Activated CD8-positive, alpha-beta T cell treated with anti-CD3 and anti-CD28 coated beads for 36 hours (primary cell): ENCODE measurements at regions of chr10 and their contacts with region 1.

Region 1: DNA sequence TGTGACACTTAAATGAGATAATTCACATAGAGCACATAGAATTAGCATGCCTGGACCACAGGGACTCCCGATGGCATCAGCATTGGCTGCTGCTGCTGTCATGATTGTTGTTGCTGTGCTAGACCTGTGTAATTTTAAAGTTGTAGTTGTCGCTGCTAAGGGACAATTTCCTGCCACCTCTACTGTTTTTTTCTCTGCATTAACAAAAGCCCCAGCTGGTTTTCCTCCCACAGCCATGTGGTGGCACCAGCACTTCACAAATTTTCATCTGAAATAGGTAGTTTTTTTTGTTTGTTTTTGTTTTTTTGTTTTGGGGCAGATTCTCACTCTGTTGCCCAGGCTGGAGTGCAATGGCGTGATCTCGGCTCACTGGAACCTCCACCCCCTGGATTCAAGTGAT is 25.4 kb upstream of the PRXL2A start:
- DNase-seq: peak; percentile 73
- ATAC-seq: peak; percentile 64
- H3K4me3 Mint-ChIP-seq: no peak overlapping the region
- H3K27ac Mint-ChIP-seq: peak overlapping the region; percentile 37
- H3K4me1 Mint-ChIP-seq: peaks cover 14% of the 10 kb centered on the region
- H3K27me3 Mint-ChIP-seq: no peaks in the 10 kb centered on the region
- CTCF ChIP-seq: peak; percentile 74

Region 2: GRCh38 chr10:80324086-80324485 is 58.9 kb before region 1 on chr10:
- CTCF ChIA-PET with region 1: no interaction called
- POLR2A ChIA-PET with region 1: no interaction called
- intact Hi-C with region 1: no loop called
- DNase-seq: peak; percentile 4
- ATAC-seq: no peak
- H3K4me3 Mint-ChIP-seq: no peak overlapping the region
- H3K27ac Mint-ChIP-seq: no peak overlapping the region
- H3K4me1 Mint-ChIP-seq: peaks cover 6% of the 10 kb centered on the region
- H3K27me3 Mint-ChIP-seq: no peaks in the 10 kb centered on the region
- CTCF ChIP-seq: no peak

Region 3: DNA sequence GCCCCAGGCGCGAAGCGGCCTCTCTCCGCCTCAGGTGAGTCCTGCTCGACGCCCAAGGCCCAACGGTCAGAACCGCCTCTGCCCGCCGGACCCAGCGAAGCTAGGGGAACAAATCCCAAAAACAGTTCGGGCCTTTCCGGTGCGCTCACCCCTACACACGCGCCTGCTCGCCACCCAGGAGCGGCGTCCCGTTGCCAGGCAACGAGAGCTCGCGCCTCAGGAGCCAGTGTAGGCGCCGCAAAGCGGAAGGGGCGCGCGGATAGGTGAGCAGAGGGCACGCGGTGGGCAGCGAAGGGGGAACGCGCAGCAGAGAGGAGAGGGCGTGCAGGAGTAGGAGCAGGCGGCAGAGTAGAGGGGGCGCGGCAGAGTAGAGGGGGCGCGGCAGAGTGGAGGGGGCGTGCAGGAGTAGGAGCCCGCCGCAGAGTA is 26.4 kb before region 1 on chr10 and contains the starts of genes DYDC1 and DYDC2:
- CTCF ChIA-PET with region 1: interaction called, 13 read pairs
- POLR2A ChIA-PET with region 1: no interaction called
- intact Hi-C with region 1: no loop called
- DNase-seq: peak; percentile 79
- ATAC-seq: peak; percentile 96
- H3K4me3 Mint-ChIP-seq: peak within 1 kb of the TSS; percentile 66
- H3K27ac Mint-ChIP-seq: no peak within 1 kb of the TSS
- H3K4me1 Mint-ChIP-seq: peaks cover 5% of the 10 kb centered on the region
- H3K27me3 Mint-ChIP-seq: peaks cover 26% of the 10 kb centered on the region
- CTCF ChIP-seq: no peak
- total RNA-seq, gene DYDC1: not detected
- total RNA-seq, gene DYDC2: 0.70 TPM in 1 of 2 experiments, not detected in the other

Region 4: GRCh38 chr10:80397014-80397413 is 14.0 kb after region 1 on chr10:
- CTCF ChIA-PET with region 1: interaction called, 10 read pairs
- POLR2A ChIA-PET with region 1: no interaction called
- intact Hi-C with region 1: no loop called
- DNase-seq: no peak
- ATAC-seq: no peak
- H3K4me3 Mint-ChIP-seq: no peak overlapping the region
- H3K27ac Mint-ChIP-seq: no peak overlapping the region
- H3K4me1 Mint-ChIP-seq: no peaks in the 10 kb centered on the region
- H3K27me3 Mint-ChIP-seq: no peaks in the 10 kb centered on the region
- CTCF ChIP-seq: no peak

Region 5: DNA sequence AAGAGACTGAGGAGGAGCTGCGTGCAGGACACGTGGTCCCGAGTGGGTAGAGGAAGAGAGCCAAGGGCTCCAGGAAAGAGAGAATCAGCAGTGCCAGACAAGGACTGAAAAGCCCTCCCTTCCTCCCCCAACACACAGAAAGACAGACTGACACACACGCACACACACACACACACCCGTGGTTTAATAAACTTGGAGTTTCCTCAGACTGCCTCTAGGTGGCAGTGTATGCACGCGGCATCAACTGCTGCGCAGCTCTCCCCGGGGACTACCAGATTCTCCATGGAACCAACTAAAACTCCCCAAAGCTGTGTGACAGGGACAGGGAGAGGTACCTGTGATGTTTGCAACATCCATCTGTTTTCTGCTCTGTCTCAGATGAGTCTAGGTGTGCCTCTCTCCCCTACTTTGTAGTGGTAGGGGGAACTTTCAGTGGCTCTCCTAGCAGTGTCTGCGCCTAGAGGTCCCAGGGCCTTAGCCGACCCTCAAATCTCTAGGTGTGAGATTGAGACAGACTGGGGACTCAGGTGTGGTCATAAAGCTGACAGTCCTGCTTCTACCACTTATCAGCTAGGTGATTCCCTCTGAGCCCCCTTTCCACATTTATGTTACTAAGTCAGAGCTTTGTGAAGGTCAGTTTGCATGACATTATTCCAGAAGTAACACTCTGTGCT is 61.8 kb after region 1 on chr10:
- CTCF ChIA-PET with region 1: interaction called, 44 read pairs
- POLR2A ChIA-PET with region 1: no interaction called
- intact Hi-C with region 1: loop called (anchors 1 kb)
- DNase-seq: peak; percentile 55
- ATAC-seq: peak; percentile 85
- H3K4me3 Mint-ChIP-seq: no peak overlapping the region
- H3K27ac Mint-ChIP-seq: peak overlapping the region; percentile 52
- H3K4me1 Mint-ChIP-seq: peaks cover 45% of the 10 kb centered on the region
- H3K27me3 Mint-ChIP-seq: no peaks in the 10 kb centered on the region
- CTCF ChIP-seq: peak; percentile 51

Region 6: GRCh38 chr10:80504158-80504811 is 121.3 kb after region 1 on chr10:
- CTCF ChIA-PET with region 1: interaction called, 61 read pairs
- POLR2A ChIA-PET with region 1: no interaction called
- intact Hi-C with region 1: loop called (anchors 5 kb)
- DNase-seq: no peak
- ATAC-seq: no peak
- H3K4me3 Mint-ChIP-seq: no peak overlapping the region
- H3K27ac Mint-ChIP-seq: peak overlapping the region; percentile 82
- H3K4me1 Mint-ChIP-seq: peaks cover 61% of the 10 kb centered on the region
- H3K27me3 Mint-ChIP-seq: no peaks in the 10 kb centered on the region
- CTCF ChIP-seq: no peak

Region 7: DNA sequence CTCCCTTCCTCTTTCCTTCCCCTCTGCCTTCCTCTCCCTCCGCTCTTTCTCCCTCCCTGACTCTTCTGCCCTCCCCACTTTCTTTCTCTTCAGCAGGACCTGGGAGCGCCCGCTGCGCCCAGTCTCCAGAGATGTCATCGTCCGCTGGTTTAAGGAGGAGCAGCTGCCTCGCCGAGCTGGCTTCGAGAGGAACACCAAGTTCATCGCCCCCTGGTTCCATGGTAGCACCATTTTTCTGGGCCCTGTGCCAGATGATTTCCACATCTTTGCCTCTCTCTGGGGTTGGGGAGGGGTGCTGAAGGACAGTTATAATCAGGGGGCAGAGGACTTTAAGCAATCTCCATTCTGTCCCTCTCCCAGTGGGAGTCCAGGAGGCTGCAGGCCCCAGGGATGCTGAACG is 226.3 kb after region 1 on chr10:
- CTCF ChIA-PET with region 1: no interaction called
- POLR2A ChIA-PET with region 1: no interaction called
- intact Hi-C with region 1: loop called (anchors 10 kb)
- DNase-seq: no peak
- ATAC-seq: no peak
- H3K4me3 Mint-ChIP-seq: no peak overlapping the region
- H3K27ac Mint-ChIP-seq: no peak overlapping the region
- H3K4me1 Mint-ChIP-seq: no peaks in the 10 kb centered on the region
- H3K27me3 Mint-ChIP-seq: no peaks in the 10 kb centered on the region
- CTCF ChIP-seq: no peak